G401 (cell line): ENCODE measurements at regions of chr3 and their contacts with region 1.

Region 1: DNA sequence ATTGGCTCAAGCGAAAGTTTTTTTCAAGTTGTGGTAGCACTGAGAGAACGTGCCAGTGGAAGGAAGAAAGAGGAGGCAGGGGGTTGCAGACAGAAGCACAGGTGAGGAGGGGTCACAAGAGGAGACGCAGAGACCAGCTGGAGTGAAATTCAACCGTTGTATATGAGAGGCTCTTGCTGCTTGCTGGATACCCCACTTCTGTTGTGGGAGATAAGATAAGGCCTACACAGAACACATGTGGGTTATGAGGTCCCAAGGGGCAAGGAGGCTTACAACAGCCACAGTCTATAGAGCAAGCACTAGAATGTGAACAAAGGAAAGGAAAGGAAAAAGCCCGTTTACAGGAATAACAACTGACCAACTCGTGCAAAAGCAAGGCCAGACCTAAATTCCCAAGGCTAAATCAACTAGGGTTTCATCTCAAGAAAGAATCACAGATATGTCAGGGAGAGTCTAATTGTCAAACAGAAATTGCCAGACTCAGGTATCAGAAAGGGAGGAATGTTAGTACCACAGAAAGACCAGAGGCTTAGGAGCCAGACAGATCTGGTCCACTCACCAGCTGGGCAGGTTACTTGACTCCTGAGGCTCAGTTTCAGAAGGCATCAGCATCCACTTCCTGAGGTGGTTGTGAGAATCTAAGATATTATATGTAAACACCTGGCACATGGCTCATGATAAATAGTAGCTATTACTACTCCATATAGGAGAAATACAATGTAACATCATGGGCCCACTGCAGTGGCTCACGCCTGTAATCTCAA is 60.9 kb downstream of the MSL2 start:
- DNase-seq: no peak

Region 2: DNA sequence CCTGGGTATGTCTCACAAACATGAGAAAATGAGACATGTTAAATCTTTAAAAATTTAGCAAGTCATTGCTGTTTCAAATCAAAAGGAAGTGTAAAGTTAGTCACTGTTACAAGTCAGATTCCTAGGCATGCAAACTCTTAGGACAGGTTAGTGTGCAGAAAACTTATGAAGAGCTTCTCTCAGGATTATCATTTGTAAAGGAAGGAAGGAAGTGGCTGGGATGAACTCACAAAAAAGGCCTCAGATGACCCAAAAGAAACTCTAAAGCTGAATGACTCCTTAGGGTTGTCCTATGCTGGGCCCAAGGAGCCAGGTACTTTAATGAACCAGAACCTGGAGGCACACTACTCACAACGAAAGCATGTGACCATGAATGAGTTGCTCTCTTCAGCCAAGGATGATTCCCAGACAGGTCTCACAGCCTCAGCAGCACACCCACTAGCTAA is 35.9 kb after region 1 on chr3:
- in situ Hi-C with region 1: no loop called
- DNase-seq: no peak

Region 3: GRCh38 chr3:136196401-136197158 is 61.4 kb after region 1 on chr3:
- in situ Hi-C with region 1: loop called (anchors 10 kb)
- DNase-seq: peak; percentile 98